Cardiac septum (tissue), 1 donor: ENCODE measurements at regions of chr6 and their contacts with region 1.

Region 1: DNA sequence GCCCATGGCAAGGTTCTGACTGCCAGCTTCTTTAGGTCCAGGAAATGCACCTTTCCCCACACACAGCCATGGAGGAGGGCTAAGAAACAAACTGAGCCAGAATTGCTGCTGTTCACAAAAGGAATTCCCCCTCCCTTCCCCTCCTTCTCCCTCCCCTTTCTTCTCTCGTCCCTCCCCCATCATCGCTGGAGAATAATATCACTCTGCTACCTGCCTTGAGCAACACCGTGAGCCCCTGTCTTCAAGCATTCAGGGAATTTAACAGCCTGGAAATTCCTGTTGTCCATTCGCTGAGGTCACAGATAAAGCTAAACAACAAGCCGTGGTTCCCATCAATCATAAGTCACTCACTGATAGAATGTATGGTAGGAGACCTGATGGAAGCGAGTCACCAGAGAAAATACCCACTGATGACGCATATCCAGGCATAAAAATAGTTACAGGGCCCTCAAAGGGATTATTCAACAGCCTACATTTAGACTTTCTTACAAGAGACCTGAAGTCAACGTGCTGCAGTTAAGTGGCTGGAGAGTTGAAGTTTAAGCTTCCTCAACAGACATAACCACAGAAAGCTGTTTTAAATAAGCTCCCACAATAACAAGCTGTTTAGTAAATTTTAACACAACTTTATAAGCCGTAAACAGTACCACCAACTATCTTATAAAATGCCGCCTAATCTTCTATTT is 59.7 kb downstream of the HIVEP2 start:
- DNase-seq: no peak

Region 2: DNA sequence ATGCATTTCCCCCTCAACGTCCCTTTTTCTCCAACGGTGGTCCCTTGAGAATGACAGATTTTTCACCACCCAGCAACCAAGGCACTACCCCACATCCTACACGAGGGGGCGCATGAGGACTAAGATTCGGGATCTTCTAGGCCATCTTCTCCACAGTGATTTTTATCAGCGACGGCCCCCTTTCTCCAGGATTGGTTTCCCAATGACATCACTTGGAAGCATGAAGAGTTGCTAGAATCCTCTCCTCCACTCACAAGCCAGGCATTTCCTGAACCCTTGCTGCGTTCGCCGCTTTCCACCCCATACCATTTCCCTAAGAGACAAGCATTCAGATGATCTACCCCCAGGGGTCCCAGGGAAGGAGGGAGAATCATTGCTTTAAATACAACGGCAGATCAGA is 192.4 kb before region 1 on chr6:
- intact Hi-C with region 1: loop called (anchors 10 kb)
- DNase-seq: no peak

Region 3: DNA sequence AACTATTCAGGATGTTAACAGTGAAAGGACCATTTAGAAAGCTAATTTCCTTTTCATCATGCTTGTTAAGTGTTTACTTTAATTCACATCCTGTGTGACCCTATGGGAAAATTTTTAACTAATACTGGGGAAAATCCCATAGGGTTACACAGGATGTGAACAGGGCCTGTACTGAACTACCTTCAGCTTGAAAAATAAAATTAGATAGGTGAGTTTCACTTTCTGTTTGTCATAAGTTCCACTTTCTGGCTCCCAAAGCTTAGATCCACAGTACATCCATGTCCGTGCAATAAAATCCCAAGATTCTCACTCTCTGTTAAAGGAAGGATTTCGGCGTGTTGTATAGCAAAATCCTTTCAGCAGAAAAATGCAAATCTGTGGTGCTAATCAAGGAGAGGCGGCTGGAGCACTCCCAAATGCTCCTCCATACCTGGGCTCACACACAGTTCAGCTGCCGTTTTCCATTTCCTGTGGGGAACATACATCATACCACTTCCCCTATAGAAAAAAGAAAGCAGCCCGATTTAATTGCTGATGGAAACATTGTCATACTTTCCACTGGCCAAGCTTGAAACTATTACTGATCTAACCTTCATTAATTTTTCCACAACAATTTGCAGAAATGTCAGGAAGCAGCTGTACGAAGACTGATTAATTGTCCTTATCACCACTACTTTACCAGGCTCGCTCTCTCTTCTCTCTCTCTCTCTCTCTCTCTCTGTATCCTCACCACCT is 65.6 kb before region 1 on chr6:
- intact Hi-C with region 1: loop called (anchors 10 kb)
- DNase-seq: no peak

Region 4: DNA sequence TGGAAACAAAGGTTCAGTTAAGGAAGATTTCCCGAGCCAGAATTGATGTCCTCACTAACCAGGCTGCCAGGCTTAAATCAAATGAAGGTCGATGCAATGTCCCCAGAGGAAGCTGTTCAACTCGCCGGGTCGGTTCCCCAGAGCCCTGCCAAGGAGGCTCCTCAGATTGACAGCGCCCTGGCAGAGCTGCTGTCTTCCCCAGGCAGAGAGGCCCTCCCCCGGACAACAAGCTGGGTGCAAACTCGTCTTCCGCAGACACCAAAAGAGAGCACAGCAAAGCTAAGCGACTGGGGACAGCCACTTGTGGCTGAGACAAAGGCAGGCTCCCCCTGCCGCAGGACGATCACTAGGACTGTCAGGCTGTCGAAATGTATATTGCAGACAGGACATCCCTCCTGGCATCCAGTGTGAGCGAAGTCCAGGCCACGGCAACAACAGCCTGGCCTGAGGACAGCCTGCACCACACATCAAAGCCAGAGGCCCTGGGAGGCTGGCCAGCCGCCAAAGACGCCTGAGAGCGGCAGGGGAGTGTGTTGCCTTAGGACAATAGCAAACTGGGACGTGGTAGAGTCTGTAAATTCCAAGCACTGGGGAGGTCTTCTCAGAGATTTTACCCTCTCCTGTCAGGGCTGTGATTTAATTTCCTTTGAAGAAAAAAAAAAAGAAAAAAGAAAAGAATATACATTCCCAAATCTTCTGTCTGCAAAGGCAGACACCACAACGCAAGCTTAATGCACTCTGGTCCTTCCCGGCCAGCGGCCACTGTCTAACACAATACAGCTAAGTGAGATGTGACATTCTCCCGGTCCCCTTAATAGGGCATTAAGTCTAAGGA is 39.5 kb before region 1 on chr6:
- intact Hi-C with region 1: loop called (anchors 5 kb)
- DNase-seq: peak; percentile 93

Region 5: DNA sequence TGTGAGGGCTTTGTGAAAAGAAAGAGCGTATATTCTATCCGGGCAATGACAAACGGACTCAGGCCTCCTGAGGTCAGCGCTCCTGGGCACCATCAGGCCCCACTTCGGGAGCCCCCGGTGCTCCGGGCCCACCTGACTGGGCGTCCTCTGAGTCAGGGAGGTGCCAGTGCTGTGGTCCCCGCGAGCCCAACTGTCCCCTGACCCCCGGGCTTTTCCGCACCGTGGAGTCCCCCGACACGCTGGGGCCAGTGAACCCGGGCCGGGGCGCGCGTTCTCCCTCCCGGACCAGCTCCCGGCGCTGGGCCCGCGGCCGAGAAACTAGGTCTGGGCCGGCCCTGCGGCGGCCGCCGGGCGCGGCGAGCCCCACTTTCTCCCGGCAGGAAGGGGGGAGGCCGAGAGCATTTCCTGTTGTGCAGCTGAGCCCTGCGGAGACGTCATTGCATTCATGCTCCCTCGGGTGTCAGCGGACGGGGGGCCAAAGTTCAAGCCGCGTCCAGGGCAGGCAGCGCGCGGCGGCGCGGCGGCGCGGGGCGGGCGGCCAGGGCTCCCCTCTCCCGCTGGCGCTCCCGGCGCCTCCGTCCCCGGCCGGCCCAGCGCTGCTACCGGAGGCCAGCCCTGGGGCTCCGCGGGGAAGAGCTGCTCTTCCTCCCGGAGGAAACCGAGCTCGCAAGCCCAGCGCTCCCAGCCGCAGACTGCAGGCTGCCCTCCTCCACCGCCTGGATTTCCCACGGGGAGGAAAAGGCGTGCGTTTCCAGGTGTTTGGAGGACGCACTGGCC is 41.4 kb after region 1 on chr6:
- intact Hi-C with region 1: loop called (anchors 1 kb)
- DNase-seq: peak; percentile 94